GM10248 (cell line): ENCODE measurements at regions of chr12 and their contacts with region 1.

Region 1: GRCh38 chr12:55642669-55643068 is 6.0 kb downstream of the OR10P1 start:
- DNase-seq: no peak
- CTCF ChIP-seq: no peak

Region 2: GRCh38 chr12:55629058-55629841 is 13.4 kb before region 1 on chr12:
- CTCF ChIA-PET with region 1: interaction called, 15 read pairs
- POLR2A ChIA-PET with region 1: interaction called, 6 read pairs
- DNase-seq: no peak
- CTCF ChIP-seq: no peak

Region 3: DNA sequence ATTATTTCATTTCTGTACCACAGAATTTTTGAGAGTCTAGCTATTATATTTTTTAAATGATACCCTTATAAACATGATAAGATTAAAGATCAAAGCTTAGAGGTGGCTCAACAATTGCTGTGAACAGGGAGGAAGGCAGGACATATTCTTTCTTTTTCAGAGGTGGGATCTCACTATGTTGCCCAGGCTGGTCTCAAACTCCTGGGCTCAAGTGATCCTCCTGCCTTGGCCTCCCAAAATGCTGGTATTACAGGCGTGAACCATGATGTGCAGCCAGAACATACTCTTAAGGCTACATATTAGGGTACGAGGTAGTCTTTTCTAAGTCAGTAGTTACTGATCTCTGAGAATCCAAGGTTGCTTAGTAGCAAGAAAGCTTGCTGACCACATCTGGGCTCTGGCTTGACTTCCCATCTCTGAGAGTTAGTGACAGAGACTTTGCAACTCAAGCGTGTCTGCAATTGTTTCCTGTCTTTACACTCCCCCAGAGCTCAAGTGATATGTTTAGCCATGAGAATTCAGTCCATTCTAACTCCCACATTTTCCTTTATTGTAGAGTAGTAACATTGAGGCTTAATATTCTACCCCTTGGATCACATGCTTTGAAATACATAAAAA is 339.8 kb after region 1 on chr12:
- CTCF ChIA-PET with region 1: no interaction called
- POLR2A ChIA-PET with region 1: no interaction called
- DNase-seq: peak; percentile 69
- CTCF ChIP-seq: no peak